ENCODE measurements at regions of chr18 and their contacts with region 1.

Region 1: DNA sequence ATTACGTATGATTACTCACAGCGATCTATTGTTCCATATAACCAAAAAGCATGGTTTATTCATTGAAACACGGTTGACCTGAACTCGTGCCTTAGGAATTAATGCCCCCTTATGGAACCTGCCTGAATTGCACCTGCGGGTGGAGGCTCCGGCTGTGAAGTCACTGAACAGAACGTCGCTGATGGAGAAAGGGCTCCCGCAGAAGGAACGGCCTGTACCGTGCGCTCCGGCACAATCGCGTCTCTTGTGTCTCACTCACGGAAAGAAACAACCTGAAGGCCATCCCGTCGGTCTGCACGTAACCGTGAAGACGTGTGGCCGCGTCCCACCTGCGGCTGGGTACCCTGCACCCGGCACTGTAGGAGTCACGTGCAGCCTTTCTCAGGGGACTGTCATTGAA is 133.1 kb downstream of the NFATC1 start:
- DNase-seq: peak; percentile 20
- H3K4me3 ChIP-seq: no peak overlapping the region
- H3K27ac ChIP-seq: no peak overlapping the region
- H3K4me1 ChIP-seq: no peaks in the 10 kb centered on the region
- H3K27me3 ChIP-seq: no peaks in the 10 kb centered on the region
- CTCF ChIP-seq: peak; percentile 51 to 53

Region 2: DNA sequence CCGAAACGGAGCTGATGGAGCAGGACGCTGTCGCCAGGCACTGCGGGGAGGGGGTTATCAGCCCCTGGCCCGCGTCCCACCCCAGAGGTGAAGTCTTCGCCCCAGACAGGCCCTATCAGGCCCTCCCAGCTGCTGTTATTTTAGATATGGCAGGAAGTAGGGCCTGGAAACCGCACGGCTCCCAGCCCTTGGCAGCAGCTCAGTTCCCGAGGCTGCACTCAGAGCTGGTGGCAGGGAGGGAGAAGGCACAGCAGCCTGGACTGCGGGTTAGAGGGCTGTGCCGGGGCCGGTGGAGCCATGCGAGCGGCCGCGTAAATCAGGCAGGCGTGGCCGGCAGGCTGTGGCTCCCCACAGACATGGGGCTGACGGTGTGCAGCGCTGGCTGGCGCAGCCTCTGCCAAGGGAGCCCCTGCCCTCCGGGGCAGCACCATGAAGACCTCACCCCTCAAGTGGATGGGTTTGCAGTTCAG is 21.7 kb before region 1 on chr18:
- CTCF ChIA-PET with region 1: no interaction called
- dilution Hi-C with region 1: no loop called
- in situ Hi-C with region 1: no loop called
- intact Hi-C with region 1: no loop called
- DNase-seq: no peak
- H3K4me3 ChIP-seq: peak overlapping the region in 1 of 3 experiments; percentile 7
- H3K27ac ChIP-seq: no peak overlapping the region
- H3K4me1 ChIP-seq: no peaks in the 10 kb centered on the region
- H3K27me3 ChIP-seq: no peaks in the 10 kb centered on the region
- CTCF ChIP-seq: no peak

Region 3: DNA sequence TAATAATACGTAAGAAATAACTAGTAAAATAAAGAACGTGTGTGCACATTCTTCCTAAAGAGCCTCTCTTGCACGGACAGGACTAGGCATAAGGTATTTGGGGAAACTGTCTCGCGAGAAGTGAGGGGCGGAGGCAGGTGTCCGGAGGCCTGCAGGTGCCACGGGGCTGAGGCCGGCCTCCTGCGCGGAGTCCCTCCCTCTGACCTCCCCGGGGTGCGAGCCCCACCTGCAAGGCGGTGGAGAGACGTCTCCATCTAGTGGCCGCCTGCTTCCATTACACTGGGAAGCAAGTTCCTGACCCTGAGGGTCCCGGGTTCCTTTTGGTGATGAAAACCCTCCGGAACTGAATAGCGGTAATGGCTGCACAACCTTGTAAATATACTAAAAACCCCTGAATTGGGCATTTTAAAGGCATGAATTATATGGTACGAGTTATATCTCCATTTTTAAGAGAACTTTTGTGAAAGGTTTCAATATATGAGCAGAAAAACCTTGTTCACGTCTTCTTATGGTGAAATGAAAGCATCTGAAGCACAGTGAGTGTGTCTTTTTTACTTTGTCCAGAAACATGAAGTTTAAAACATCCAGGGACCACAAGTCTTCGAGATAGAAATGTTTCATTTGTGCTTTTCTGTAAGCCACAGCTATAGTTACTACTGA is 115.3 kb after region 1 on chr18:
- CTCF ChIA-PET with region 1: no interaction called
- dilution Hi-C with region 1: no loop called
- in situ Hi-C with region 1: no loop called
- intact Hi-C with region 1: loop called (anchors 5 kb)
- DNase-seq: peak; percentile 32
- H3K4me3 ChIP-seq: no peak overlapping the region
- H3K27ac ChIP-seq: no peak overlapping the region
- H3K4me1 ChIP-seq: no peaks in the 10 kb centered on the region
- H3K27me3 ChIP-seq: no peaks in the 10 kb centered on the region
- CTCF ChIP-seq: peak; percentile 77 to 96